ENCODE measurements at regions of chr18 and their contacts with region 1.

Region 1: DNA sequence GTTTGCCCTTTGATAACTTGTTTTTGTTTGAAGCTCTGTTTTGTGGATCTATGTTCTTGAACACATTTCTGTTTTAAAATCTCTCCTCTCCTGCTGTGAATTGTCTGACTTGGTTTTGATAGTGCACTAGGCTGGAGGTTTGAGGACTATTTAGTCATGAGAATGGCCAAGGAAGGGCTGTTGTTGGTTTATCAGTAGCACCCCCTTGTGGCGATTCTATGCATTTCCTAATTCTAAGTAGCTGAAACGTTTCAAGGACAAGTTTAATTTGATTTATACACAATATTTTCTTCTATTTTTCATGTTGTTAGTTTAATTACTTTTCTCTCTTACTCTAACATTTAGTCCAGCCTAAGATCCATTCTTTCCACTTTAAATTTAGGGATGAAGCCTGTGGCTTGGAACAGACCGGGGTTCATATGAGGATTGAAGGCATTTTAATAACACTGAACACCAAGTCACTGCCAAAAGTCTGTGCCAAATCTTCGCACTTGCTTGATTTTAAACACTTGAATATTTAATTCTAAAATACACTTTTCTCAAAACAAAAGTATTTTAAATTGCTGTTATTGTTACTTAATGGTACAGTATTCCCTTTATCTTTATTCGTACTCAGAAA is 166.0 kb downstream of the SOCS6 start:
- DNase-seq: peak; percentile 62
- H3K4me3 Mint-ChIP-seq: no peak overlapping the region
- H3K27ac Mint-ChIP-seq: no peak overlapping the region
- H3K4me1 Mint-ChIP-seq: no peaks in the 10 kb centered on the region
- H3K27me3 Mint-ChIP-seq: no peaks in the 10 kb centered on the region
- CTCF ChIP-seq: peak; percentile 78

Region 2: GRCh38 chr18:68847219-68847837 is 1607.5 kb before region 1 on chr18:
- CTCF ChIA-PET with region 1: no interaction called
- intact Hi-C with region 1: loop called (anchors 10 kb)
- DNase-seq: no peak
- H3K4me3 Mint-ChIP-seq: no peak overlapping the region
- H3K27ac Mint-ChIP-seq: no peak overlapping the region
- H3K4me1 Mint-ChIP-seq: no peaks in the 10 kb centered on the region
- H3K27me3 Mint-ChIP-seq: no peaks in the 10 kb centered on the region
- CTCF ChIP-seq: peak; percentile 59

Region 3: DNA sequence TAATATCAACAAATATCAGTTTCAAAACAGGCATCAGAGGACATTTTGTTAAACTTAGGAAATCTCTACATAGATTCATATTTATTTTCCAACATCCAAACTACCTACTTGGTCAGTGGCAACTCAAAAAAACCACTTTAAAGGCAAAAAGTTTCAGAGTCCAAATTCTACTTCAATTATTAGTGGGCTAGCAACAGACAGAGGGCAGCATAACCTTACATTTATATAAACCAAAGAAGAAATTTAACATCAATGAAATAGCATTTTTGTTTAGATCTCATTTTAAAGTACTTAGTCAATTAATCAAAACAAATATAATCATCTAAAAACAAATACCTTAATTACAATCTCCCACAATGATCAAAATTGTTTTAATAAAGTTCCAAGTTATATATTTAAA is 282.6 kb before region 1 on chr18:
- CTCF ChIA-PET with region 1: interaction called, 4 read pairs
- intact Hi-C with region 1: loop called (anchors 1 kb)
- DNase-seq: no peak
- H3K4me3 Mint-ChIP-seq: no peak overlapping the region
- H3K27ac Mint-ChIP-seq: no peak overlapping the region
- H3K4me1 Mint-ChIP-seq: peaks cover 20% of the 10 kb centered on the region
- H3K27me3 Mint-ChIP-seq: no peaks in the 10 kb centered on the region
- CTCF ChIP-seq: peak; percentile 30

Region 4: GRCh38 chr18:70195852-70196434 is 258.9 kb before region 1 on chr18:
- CTCF ChIA-PET with region 1: interaction called, 17 read pairs
- intact Hi-C with region 1: loop called (anchors 1 kb)
- DNase-seq: peak; percentile 27
- H3K4me3 Mint-ChIP-seq: no peak overlapping the region
- H3K27ac Mint-ChIP-seq: no peak overlapping the region
- H3K4me1 Mint-ChIP-seq: peaks cover 9% of the 10 kb centered on the region
- H3K27me3 Mint-ChIP-seq: no peaks in the 10 kb centered on the region
- CTCF ChIP-seq: peak; percentile 50